Activated naive CD4-positive, alpha-beta T cell treated with anti-CD3 and anti-CD28 coated beads for 36 hours (primary cell): ENCODE measurements at regions of chr2 and their contacts with region 1.

Region 1: GRCh38 chr2:41414486-41415230 is 633.2 kb upstream of the PKDCC start:
- DNase-seq: peak; percentile 4
- H3K4me3 Mint-ChIP-seq: no peak overlapping the region
- H3K27ac Mint-ChIP-seq: no peak overlapping the region
- H3K4me1 Mint-ChIP-seq: no peaks in the 10 kb centered on the region
- H3K27me3 Mint-ChIP-seq: peaks cover 3% of the 10 kb centered on the region

Region 2: DNA sequence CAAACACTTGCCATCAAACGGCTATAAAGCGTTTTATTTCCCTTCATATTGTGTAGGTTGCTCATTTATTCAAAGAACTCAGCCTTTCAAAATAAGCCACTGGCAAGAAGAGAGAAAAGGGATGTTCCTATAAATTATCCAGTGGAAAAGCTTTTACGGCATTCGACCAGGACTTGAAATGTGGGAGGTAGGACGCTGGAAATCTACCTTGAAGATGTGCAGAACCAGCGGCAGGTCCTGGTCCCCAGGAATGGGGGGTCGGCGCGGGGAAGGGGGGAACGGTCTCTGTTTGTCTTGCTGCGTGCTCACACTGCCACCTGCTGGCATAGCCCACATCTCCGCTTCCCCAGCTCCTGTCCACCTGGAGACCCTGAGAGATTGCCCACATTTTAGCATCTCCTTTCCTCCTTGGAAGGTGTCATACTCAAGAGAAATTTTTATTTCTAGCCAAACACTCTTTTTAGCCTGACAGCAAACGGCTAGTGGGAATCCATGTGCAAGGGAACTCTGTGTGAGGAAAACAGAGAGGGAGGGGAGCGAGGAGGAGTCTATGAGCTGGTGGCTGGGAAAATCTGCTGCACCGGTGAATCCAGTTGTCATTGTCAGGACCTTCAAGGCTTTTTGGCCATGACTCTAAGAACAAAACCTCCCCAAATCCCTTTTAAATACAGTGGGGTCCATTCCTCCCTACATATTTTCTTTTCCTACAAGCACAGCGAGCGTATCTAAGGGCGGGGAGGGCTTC is 284.2 kb after region 1 on chr2:
- CTCF ChIA-PET with region 1: interaction called, 5 read pairs
- intact Hi-C with region 1: loop called (anchors 1 kb)
- DNase-seq: peak; percentile 27
- H3K4me3 Mint-ChIP-seq: no peak overlapping the region
- H3K27ac Mint-ChIP-seq: no peak overlapping the region
- H3K4me1 Mint-ChIP-seq: no peaks in the 10 kb centered on the region
- H3K27me3 Mint-ChIP-seq: no peaks in the 10 kb centered on the region